WTC11 (cell line): ENCODE measurements at regions of chr9 and their contacts with region 1.

Region 1: GRCh38 chr9:34759432-34760134 is 49.6 kb upstream of the CCL21 start:
- DNase-seq: no peak
- ATAC-seq: no peak
- H3K4me3 Mint-ChIP-seq: no peak overlapping the region
- H3K27ac Mint-ChIP-seq: no peak overlapping the region
- H3K4me1 Mint-ChIP-seq: no peaks in the 10 kb centered on the region
- H3K27me3 Mint-ChIP-seq: peaks cover 22% of the 10 kb centered on the region
- CTCF ChIP-seq: no peak

Region 2: DNA sequence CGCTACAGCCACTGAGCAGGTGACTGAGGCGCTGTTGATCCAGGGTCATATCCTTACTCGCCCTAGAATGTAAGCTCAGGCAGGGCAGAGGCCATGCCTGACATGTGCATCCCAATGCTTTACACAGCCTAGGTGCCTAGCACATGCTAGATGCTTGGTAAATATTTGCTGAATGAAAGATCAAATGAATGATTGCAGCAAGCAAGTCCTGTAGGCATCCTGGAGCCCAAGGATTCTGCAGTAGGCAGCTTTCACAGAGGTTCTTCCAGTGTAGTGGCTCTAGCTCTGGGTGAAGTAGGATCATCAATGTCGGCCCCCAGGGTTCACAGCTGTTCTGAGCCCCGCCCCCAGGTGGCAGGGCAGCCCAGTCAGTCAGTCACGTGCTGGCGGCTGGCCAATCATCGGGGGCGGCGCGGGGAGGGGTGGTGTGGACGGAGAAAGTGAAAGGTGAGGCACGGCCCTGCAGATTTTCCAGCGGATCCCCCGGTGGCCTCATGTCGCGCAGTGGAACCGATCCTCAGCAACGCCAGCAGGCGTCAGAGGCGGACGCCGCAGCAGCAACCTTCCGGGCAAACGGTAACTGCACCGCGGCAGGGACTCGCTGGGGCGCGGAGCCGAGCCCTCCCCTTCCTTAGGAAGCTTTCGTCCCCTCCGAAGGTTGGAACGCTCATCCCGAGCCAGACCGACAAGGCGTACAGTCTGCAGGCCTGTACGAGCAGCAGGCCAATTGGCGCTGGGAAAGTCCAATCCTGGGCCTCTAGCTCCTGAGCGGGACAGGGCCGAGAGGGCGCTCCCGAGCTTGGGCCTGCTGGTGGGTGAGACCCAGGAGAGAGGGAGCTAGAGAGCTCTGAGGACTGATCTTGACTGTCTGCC is 113.1 kb before region 1 on chr9 and contains the start of gene GALT:
- CTCF ChIA-PET with region 1: no interaction called
- POLR2A ChIA-PET with region 1: no interaction called
- DNase-seq: peak; percentile 95
- ATAC-seq: peak; percentile 87
- H3K4me3 Mint-ChIP-seq: peak within 1 kb of the TSS; percentile 85
- H3K27ac Mint-ChIP-seq: peak within 1 kb of the TSS; percentile 76
- H3K4me1 Mint-ChIP-seq: peaks cover 34% of the 10 kb centered on the region
- H3K27me3 Mint-ChIP-seq: no peaks in the 10 kb centered on the region
- CTCF ChIP-seq: no peak
- total RNA-seq, gene GALT: 35.9 to 39.7 TPM (median 37.6 TPM) in 3 replicates

Region 3: GRCh38 chr9:34809504-34810186 is 50.1 kb after region 1 on chr9:
- CTCF ChIA-PET with region 1: interaction called, 17 read pairs
- POLR2A ChIA-PET with region 1: no interaction called
- DNase-seq: peak; percentile 83
- ATAC-seq: peak; percentile 100
- H3K4me3 Mint-ChIP-seq: peak overlapping the region; percentile 58
- H3K27ac Mint-ChIP-seq: no peak overlapping the region
- H3K4me1 Mint-ChIP-seq: peaks cover 3% of the 10 kb centered on the region; the same call in 1 of the 2 replicates
- H3K27me3 Mint-ChIP-seq: peaks cover 81% of the 10 kb centered on the region
- CTCF ChIP-seq: no peak

Region 4: DNA sequence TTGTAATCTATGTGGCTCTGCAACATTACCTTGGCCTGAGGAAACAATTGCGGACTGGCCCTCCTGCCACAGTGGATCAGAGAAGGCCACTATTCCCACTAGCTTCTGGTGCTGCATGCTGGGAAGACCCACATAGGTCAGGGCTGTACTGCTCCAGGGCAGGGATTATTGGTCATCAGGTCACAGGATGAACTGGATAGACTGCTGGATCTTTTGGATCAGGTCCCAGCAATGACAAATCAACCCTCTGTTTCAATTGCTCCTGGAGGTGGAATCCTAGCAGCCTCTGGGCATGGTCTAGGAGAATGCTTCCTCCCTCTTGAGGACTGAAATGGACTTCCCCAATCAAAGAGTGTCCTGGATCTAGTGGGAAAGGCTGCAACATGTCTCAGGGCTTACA is 131.8 kb after region 1 on chr9:
- CTCF ChIA-PET with region 1: interaction called, 16 read pairs
- POLR2A ChIA-PET with region 1: no interaction called
- DNase-seq: no peak
- ATAC-seq: no peak
- H3K4me3 Mint-ChIP-seq: no peak overlapping the region
- H3K27ac Mint-ChIP-seq: no peak overlapping the region
- H3K4me1 Mint-ChIP-seq: no peaks in the 10 kb centered on the region
- H3K27me3 Mint-ChIP-seq: peaks cover 15% of the 10 kb centered on the region
- CTCF ChIP-seq: no peak

Region 5: DNA sequence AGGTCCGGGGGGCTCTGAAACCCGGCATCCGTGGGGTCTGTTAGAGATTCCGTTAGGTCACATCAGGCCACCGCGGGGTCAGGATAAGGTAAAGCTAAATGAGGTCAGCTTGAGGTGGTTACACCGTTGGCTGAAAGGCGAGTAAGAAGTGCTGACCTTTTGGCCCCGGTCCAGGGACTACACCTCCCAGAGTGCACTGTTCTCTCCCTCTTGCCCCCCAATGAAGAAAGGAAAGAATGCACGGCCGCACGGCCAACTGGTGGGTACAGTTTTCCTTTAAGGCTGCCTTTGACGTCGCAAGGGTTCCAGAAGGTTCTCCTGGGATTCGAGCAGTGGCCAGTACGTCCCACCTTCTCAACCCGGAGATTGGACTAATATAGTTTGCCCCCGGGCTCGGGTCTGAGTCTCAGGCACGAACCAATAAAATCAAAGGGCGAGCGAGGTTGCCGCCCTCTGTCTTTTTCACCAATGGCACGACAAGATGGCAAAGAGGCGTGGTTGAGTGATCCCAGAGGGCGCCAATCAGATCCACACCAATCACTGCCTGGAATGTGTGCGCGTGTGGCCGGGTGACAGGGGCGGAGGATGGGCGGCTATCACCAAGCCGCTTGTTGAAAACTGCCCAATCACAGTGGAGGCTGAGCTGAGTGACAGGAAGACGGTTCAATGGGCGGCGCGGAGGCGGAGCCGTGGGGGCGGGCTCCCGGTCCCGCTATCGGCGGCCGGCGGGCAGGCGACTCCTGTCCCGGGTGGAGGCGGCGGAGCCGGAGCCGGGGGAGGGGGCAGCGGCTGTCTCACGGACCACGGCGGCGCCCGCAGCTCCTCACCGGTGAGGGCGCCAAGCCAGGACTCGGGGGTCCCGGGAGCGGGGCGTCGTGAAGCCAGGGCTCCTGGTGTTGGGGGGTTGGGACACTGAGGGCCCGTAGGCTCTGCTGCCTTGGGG is 229.7 kb after region 1 on chr9 and contains the start of gene DNAJB5:
- CTCF ChIA-PET with region 1: interaction called, 28 read pairs
- POLR2A ChIA-PET with region 1: no interaction called
- DNase-seq: peak; percentile 98
- ATAC-seq: peak; percentile 85
- H3K4me3 Mint-ChIP-seq: peak within 1 kb of the TSS; percentile 82
- H3K27ac Mint-ChIP-seq: peak within 1 kb of the TSS; percentile 98
- H3K4me1 Mint-ChIP-seq: peaks cover 60% of the 10 kb centered on the region
- H3K27me3 Mint-ChIP-seq: peaks cover 4% of the 10 kb centered on the region
- CTCF ChIP-seq: no peak
- total RNA-seq, gene DNAJB5: 26.7 to 30.0 TPM (median 28.6 TPM) in 3 replicates

Region 6: DNA sequence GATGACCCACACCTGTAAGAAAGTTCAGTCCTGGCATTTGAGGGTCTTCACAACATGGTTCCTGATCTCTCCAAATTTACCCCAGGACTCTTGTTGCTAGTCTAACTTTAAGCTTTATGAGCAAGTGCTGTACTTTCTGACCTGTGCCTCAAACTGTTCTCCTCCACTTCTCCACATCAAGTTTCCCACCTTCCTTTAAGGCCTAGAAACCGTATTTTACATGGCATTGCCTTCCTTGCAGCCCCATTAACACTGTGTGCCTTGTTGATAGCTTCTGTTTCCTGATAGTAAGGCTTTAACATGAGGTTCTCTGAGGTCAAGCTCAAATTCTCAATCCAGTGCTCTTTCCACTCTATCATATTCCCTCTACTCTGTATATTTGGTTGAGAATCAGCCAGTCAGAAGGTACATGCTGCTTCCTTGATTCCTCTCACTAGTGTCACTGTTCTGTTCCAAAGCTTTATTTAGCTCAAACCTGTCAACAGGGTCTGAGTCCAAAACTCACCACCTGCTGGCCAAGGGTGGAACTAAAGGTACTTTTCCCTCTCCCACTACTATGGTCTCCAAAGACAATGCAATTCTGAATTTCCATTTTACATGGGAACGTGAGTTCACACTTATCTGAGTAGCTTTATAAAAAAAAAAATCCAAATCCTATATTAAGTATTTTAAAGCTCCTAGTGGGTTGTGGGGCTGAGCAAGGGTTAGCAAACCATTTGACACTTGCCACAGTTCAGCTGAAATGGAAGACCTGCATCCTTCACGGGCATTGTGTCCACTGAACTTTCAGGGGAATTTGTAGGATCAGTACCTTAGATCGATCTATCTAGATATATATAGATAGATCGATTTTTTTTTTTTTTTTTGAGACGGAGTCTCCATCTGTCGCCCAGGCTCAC is 291.7 kb after region 1 on chr9:
- CTCF ChIA-PET with region 1: interaction called, 12 read pairs
- POLR2A ChIA-PET with region 1: no interaction called
- DNase-seq: peak; percentile 71
- ATAC-seq: peak; percentile 84
- H3K4me3 Mint-ChIP-seq: no peak overlapping the region
- H3K27ac Mint-ChIP-seq: peak overlapping the region; percentile 54
- H3K4me1 Mint-ChIP-seq: peaks cover 3% of the 10 kb centered on the region; the same call in 1 of the 2 replicates
- H3K27me3 Mint-ChIP-seq: no peaks in the 10 kb centered on the region
- CTCF ChIP-seq: peak; percentile 68